Vagina (tissue), 2 donors: ENCODE measurements at regions of chr2 and their contacts with region 1.

Region 1: DNA sequence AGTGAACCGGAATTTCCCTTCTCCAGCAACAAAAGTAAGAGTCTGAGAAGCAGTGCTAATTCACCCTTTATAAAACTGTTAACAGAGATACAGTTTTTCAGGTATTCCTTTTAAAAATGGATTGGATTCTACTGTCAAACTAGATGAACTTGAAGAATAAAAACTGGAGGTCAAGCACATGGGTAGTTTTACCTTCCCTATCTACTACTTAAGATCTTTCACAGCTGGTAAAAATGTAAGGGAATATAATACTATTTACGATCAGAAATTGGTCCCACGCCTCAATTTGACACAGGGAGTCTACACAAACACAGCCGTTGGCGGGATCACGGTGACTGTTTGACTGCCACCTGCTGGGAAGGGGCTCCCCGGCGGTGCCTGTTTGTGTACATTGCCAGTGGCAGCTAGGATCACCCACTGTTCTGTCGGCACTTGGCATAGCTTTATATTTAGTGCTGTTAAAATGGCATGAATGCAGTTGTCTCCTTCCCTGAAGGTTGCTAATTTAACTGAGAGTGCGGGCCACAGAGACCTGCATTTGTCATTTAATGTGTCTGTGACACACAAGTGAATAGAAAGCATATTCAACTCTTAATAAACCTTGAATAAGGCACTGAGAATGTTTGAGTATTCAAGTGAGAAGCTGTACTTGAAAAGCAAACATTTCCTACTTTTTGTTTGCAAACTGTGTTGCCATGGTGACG is 59.5 kb downstream of the ABCG8 start:
- DNase-seq: no peak
- H3K4me3 ChIP-seq: no peak overlapping the region
- H3K27ac ChIP-seq: no peak overlapping the region
- H3K4me1 ChIP-seq: no peaks in the 10 kb centered on the region
- H3K27me3 ChIP-seq: no peaks in the 10 kb centered on the region
- CTCF ChIP-seq: no peak
- POLR2A ChIP-seq: no peak

Region 2: DNA sequence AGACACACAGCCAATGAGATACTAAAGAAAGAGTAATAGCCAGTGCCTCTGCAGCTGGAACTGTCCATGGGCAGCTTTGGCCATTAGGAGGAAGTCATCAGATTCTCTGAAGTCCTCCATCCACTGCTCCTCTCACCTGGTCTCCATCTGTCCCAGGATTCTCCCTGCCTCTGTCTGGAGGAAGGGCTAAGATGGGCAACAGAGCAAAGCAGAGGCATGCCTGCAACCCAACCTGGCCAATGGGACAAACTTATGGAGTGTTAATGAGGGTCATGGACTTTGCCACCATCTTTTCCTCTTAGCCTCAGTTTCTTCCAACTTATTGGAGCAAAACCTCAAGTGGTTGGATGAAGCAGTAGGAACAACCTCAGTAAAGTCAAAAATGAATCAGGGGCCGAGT is 951.7 kb after region 1 on chr2:
- intact Hi-C with region 1: loop called (anchors 5 kb)
- DNase-seq: peak in 1 of 2 donors; percentile 82
- H3K4me3 ChIP-seq: no peak overlapping the region
- H3K27ac ChIP-seq: no peak overlapping the region
- H3K4me1 ChIP-seq: no peaks in the 10 kb centered on the region
- H3K27me3 ChIP-seq: no peaks in the 10 kb centered on the region
- CTCF ChIP-seq: no peak
- POLR2A ChIP-seq: no peak